IMR-90 (cell line): ENCODE measurements at regions of chr14 and their contacts with region 1.

Region 1: GRCh38 chr14:49692811-49693734 is at the start of gene KLHDC1:
- DNase-seq: peak; percentile 63
- ATAC-seq: peak; percentile 82
- H3K4me3 ChIP-seq: peak within 1 kb of the TSS; percentile 68
- H3K27ac ChIP-seq: peak within 1 kb of the TSS; percentile 79
- H3K4me1 ChIP-seq: peaks cover 3% of the 10 kb centered on the region
- H3K27me3 ChIP-seq: no peaks in the 10 kb centered on the region
- CTCF ChIP-seq: no peak
- POLR2A ChIP-seq: peak; percentile 80
- RAD21 ChIP-seq: no peak
- total RNA-seq, gene KLHDC1: 0.90 and 1.9 TPM in 2 replicates

Region 2: GRCh38 chr14:49767562-49768300 is 74.7 kb after region 1 on chr14 and contains the start of gene KLHDC2:
- CTCF ChIA-PET with region 1: no interaction called
- POLR2A ChIA-PET with region 1: no interaction called
- dilution Hi-C with region 1: no loop called
- in situ Hi-C with region 1: loop called (anchors 5 kb)
- intact Hi-C with region 1: loop called (anchors 1 kb)
- DNase-seq: peak; percentile 88
- ATAC-seq: peak; percentile 90
- H3K4me3 ChIP-seq: peak within 1 kb of the TSS; percentile 96
- H3K27ac ChIP-seq: peak within 1 kb of the TSS; percentile 91
- H3K4me1 ChIP-seq: peaks cover 9% of the 10 kb centered on the region
- H3K27me3 ChIP-seq: no peaks in the 10 kb centered on the region
- CTCF ChIP-seq: peak; percentile 53
- POLR2A ChIP-seq: peak; percentile 91
- RAD21 ChIP-seq: no peak
- total RNA-seq, gene KLHDC2: 41.8 and 51.1 TPM in 2 replicates